Activated CD4-positive, alpha-beta T cell treated with anti-CD3 and anti-CD28 coated beads for 36 hours (primary cell): ENCODE measurements at regions of chr19 and their contacts with region 1.

Region 1: GRCh38 chr19:10403137-10404021 is at the start of gene CDC37:
- DNase-seq: peak; percentile 99
- ATAC-seq: peak; percentile 79
- H3K4me3 Mint-ChIP-seq: peak within 1 kb of the TSS; percentile 94
- H3K27ac Mint-ChIP-seq: peak within 1 kb of the TSS; percentile 87
- H3K4me1 Mint-ChIP-seq: peaks cover 61% of the 10 kb centered on the region
- H3K27me3 Mint-ChIP-seq: no peaks in the 10 kb centered on the region
- total RNA-seq, gene CDC37: 178 to 190 TPM

Region 2: DNA sequence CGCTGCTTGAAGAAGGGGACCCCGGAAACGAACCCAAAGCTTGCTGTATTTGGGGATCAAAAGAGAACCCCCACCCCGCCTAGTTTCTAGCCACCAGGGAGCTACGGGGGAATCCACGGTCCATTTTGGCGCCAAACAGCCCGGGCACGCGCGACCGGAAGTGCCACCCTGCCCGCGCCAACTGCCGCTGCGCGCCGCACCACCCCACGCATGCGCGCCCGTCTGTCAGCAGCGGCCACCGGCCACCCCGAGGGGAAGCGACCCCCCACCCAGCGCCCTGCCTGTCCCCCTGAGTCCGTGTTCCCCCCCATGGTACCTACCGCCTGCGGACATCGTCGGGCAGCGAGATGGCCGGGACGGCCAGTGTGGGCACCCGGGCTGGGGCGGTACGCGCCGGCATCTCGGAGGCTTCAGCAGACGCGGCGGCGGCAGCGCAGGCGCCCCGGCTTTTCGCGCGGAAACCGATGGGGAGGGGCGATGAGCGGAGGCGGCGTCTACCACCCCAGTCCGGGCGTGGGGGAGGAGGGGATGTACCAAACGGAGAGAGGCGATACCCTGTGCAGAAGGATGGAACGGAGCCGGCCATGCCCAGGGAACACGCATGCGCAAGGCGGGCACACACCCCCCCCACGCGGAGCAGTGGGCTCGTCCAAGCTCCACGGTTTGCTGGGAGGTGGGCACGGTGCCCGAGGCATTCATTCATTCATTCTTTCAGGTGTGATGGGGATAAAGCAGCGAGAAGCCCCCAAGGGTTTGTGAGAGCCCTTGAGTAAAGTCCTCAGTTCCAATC is 208.7 kb before region 1 on chr19 and contains the start of gene DNMT1:
- CTCF ChIA-PET with region 1: interaction called, 3 read pairs
- POLR2A ChIA-PET with region 1: no interaction called
- intact Hi-C with region 1: loop called in 1 of 2 experiments (anchors 1 kb)
- DNase-seq: peak; percentile 99
- ATAC-seq: peak; percentile 94
- H3K4me3 Mint-ChIP-seq: peak within 1 kb of the TSS; percentile 89
- H3K27ac Mint-ChIP-seq: peak within 1 kb of the TSS; percentile 97
- H3K4me1 Mint-ChIP-seq: peaks cover 49% of the 10 kb centered on the region
- H3K27me3 Mint-ChIP-seq: no peaks in the 10 kb centered on the region
- total RNA-seq, gene DNMT1: 374 to 385 TPM

Region 3: DNA sequence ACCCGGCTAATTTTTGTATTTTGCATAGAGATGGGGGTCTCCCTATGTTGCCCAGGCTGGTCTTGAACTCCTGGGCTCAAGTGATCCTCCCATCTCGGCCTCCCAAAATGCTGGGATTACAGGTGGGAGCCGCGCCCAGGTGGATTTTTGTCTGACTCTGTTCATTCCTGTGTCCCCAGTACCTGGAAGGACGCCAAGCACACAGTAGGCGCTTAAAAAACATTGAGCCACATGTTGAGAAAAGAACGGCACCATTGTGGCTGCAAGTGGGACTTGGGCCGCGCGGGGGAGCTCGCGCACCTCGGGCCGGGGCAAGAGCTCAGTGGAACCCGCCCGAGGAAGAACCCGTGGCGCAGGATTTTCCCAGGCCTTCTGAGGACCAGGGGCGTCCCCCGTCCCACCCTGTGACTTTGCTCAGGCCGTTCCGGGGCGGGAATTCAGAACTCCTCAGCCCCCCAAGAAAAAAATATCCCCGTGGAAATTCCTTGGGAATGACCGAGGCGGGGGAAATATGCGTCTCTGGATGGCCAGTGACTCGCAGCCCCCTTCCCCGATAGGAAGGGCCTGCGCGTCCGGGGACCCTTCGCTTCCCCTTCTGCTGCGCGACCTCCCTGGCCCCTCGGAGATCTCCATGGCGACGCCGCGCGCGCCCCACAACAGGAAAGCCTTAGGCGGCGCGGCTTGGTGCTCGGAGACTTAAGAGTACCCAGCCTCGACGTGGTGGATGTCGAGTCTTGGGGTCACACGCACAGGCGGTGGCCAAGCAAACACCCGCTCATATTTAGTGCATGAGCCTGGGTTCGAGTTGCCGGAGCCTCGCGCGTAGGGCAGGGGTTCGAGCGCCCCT is 133.8 kb before region 1 on chr19:
- CTCF ChIA-PET with region 1: interaction called, 8 read pairs
- POLR2A ChIA-PET with region 1: interaction called, 7 read pairs
- intact Hi-C with region 1: loop called in 1 of 2 experiments (anchors 1 kb)
- DNase-seq: peak; percentile 94
- ATAC-seq: peak; percentile 62
- H3K4me3 Mint-ChIP-seq: peak overlapping the region; percentile 80
- H3K27ac Mint-ChIP-seq: peak overlapping the region; percentile 91
- H3K4me1 Mint-ChIP-seq: peaks cover 35% of the 10 kb centered on the region
- H3K27me3 Mint-ChIP-seq: no peaks in the 10 kb centered on the region

Region 4: GRCh38 chr19:10416380-10417257 is 13.2 kb after region 1 on chr19:
- CTCF ChIA-PET with region 1: interaction called, 135 read pairs
- POLR2A ChIA-PET with region 1: interaction called, 7 read pairs
- intact Hi-C with region 1: loop called (anchors 1 kb)
- DNase-seq: peak; percentile 98
- ATAC-seq: peak; percentile 61
- H3K4me3 Mint-ChIP-seq: peak overlapping the region; percentile 59
- H3K27ac Mint-ChIP-seq: peak overlapping the region; percentile 45
- H3K4me1 Mint-ChIP-seq: peaks cover 51% of the 10 kb centered on the region
- H3K27me3 Mint-ChIP-seq: peaks cover 36% of the 10 kb centered on the region

Region 5: DNA sequence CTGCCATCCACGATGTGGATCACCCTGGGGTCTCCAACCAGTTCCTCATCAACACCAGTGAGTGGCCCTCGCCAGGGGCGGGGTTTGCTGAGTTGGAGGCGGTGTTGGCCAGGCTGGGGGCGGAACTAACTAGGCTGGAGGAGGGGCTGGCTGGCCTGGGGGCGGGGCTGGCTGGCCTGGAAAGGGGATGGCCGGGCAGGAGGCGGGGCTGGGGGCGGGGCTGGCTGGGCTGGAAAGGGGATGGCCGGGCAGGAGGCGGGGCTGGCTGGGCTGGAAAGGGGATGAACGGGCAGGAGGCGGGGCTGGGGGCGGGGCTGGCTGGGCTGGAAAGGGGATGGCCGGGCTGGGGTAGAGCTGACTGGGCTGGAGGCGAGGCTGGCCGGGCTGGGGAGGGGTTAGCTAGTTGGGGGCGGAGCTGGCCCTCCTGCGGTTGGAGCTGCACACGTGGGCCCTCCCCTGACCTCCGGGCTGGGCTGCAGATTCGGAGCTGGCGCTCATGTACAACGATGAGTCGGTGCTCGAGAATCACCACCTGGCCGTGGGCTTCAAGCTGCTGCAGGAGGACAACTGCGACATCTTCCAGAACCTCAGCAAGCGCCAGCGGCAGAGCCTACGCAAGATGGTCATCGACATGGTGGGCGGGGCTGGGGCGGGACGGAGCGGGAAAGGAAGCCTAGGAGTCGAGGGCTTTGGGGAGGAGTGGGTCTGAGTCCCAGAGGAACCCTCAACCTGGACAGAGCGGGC is 57.8 kb after region 1 on chr19:
- CTCF ChIA-PET with region 1: no interaction called
- POLR2A ChIA-PET with region 1: interaction called, 3 read pairs
- intact Hi-C with region 1: loop called in 1 of 2 experiments (anchors 1 kb)
- DNase-seq: peak; percentile 98
- ATAC-seq: peak; percentile 98
- H3K4me3 Mint-ChIP-seq: peak overlapping the region; percentile 43
- H3K27ac Mint-ChIP-seq: no peak overlapping the region
- H3K4me1 Mint-ChIP-seq: peaks cover 9% of the 10 kb centered on the region
- H3K27me3 Mint-ChIP-seq: peaks cover 3% of the 10 kb centered on the region

Region 6: GRCh38 chr19:10543420-10544241 is 140.3 kb after region 1 on chr19 and contains the start of gene ATG4D:
- CTCF ChIA-PET with region 1: no interaction called
- POLR2A ChIA-PET with region 1: no interaction called
- intact Hi-C with region 1: loop called in 1 of 2 experiments (anchors 2 kb)
- DNase-seq: peak; percentile 89
- ATAC-seq: peak; percentile 85
- H3K4me3 Mint-ChIP-seq: peak within 1 kb of the TSS; percentile 85
- H3K27ac Mint-ChIP-seq: peak within 1 kb of the TSS; percentile 84
- H3K4me1 Mint-ChIP-seq: peaks cover 14% of the 10 kb centered on the region
- H3K27me3 Mint-ChIP-seq: peaks cover 8% of the 10 kb centered on the region
- total RNA-seq, gene ATG4D: 18.9 to 19.3 TPM

Region 7: DNA sequence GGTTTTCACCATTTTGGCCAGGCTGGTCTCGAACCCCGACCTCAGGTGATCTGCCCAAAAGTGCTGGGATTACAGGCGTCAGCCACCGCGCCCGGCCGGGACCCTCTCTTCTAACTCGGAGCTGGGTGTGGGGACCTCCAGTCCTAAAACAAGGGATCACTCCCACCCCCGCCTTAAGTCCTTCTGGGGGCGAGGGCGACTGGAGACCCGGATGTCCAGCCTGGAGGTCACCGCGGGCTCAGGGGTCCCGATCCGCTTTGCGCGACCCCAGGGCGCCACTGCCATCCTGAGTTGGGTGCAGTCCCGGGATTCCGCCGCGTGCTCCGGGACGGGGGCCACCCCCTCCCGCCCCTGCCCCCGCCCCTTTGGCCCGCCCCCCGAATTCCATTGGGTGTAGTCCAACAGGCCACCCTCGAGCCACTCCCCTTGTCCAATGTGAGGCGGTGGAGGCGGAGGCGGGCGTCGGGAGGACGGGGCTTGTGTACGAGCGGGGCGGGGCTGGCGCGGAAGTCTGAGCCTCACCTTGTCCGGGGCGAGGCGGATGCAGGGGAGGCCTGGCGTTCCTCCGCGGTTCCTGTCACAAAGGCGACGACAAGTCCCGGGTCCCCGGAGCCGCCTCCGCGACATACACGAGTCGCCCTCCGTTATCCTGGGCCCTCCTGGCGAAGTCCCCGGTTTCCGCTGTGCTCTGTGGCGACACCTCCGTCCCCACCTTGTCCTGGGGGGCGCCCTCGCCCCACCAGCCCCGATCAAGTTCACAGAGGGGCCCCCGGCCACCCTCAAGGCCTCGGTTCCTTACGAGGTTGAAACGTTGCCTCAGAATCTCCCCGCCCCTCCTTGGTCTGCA is 686.9 kb after region 1 on chr19:
- CTCF ChIA-PET with region 1: no interaction called
- POLR2A ChIA-PET with region 1: no interaction called
- intact Hi-C with region 1: loop called in 1 of 2 experiments (anchors 10 kb)
- DNase-seq: peak; percentile 99
- ATAC-seq: peak; percentile 88
- H3K4me3 Mint-ChIP-seq: peak overlapping the region; percentile 93
- H3K27ac Mint-ChIP-seq: peak overlapping the region; percentile 97
- H3K4me1 Mint-ChIP-seq: peaks cover 51% of the 10 kb centered on the region
- H3K27me3 Mint-ChIP-seq: no peaks in the 10 kb centered on the region